Mammary epithelial cell (primary cell): ENCODE measurements at regions of chr7 and their contacts with region 1.

Region 1: GRCh38 chr7:121519548-121520521 is 123.7 kb upstream of the FAM3C start:
- DNase-seq: no peak
- H3K4me3 ChIP-seq: no peak overlapping the region
- H3K27ac ChIP-seq: no peak overlapping the region
- H3K4me1 ChIP-seq: peaks cover 15% of the 10 kb centered on the region
- H3K27me3 ChIP-seq: no peaks in the 10 kb centered on the region
- CTCF ChIP-seq: no peak

Region 2: DNA sequence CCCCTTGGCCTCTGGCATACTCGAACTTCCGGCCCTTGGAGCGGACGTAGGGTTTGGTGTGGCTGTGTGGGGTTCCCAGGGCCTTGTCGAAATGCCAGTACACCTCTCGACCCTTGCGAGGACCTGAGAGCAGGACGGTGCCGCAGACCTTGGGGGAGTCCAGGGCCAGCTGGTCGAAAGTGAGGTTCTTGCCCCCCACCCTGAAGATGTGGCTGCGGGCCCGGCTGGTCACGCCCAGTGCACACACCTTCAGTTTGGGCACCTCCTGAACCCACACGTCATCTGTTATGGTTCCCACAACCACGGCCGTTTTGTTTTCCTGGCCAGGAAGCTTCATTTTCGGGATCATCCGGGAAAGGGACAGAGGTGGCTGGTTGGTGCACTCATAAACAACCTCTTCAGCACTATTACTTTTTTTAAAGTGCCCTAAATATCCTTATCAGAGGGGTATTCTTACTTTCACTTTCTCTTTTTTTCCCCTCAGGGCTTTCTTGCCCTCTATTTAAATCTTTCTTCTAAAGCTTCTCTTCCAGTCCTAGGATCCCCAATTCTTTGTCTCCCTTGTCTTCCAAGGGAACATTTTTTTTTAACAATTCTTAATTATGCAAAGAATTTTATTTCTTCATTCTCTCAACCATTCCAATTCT is 78.9 kb before region 1 on chr7:
- CTCF ChIA-PET with region 1: no interaction called
- dilution Hi-C with region 1: no loop called
- in situ Hi-C with region 1: no loop called
- intact Hi-C with region 1: loop called (anchors 5 kb)
- DNase-seq: no peak
- H3K4me3 ChIP-seq: no peak overlapping the region
- H3K27ac ChIP-seq: no peak overlapping the region
- H3K4me1 ChIP-seq: peaks cover 13% of the 10 kb centered on the region
- H3K27me3 ChIP-seq: no peaks in the 10 kb centered on the region
- CTCF ChIP-seq: no peak

Region 3: GRCh38 chr7:121475806-121476205 is 44.0 kb before region 1 on chr7:
- CTCF ChIA-PET with region 1: no interaction called
- dilution Hi-C with region 1: no loop called
- in situ Hi-C with region 1: no loop called
- intact Hi-C with region 1: no loop called
- DNase-seq: no peak
- H3K4me3 ChIP-seq: no peak overlapping the region
- H3K27ac ChIP-seq: no peak overlapping the region
- H3K4me1 ChIP-seq: peaks cover 7% of the 10 kb centered on the region
- H3K27me3 ChIP-seq: no peaks in the 10 kb centered on the region
- CTCF ChIP-seq: no peak

Region 4: DNA sequence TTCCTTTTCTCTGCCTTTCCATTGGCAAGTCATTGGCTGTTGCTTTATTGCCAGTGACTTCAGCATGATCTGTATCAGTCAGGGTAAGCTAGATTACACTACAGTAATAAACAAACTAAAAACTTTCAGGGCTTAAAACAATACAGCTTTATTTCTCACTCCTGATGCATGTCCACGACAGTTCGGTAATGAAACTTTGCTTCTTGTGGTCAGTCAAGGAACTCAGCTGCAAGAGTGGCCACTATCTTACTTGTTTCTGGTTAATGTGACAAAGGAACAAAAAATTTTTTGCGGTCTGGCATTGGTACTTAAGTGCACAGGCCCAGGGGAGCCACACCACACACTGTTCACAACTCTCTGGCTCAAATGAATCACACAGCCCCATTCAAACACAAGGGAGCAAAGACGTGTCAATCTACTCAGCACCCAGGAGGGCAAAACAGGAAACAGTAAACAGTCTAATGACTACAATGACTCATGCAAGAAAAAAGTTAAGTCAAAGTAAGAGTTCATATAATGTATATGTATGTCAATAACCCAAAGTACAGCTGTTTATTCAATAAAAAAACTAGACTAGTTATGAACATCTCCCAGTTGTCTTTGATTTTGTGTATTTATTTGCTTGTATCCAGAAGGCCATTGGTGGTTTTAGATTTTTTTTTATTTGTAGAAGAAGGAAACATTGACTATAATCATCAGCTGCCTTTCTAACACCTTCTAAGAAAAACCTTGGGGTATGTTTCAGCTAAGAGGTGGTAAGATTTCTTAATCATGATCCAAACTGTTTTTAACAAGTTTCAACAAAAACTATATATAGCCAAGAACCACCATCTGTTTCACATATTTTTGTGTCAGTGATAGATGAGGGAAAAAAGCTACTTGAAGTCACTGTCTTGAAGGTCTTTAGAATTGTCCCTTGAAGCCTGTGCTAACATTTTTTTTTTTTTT is 10.7 kb after region 1 on chr7:
- CTCF ChIA-PET with region 1: no interaction called
- dilution Hi-C with region 1: no loop called
- in situ Hi-C with region 1: no loop called
- intact Hi-C with region 1: loop called (anchors 1 kb)
- DNase-seq: peak; percentile 99
- H3K4me3 ChIP-seq: no peak overlapping the region
- H3K27ac ChIP-seq: peak overlapping the region; percentile 72
- H3K4me1 ChIP-seq: peaks cover 20% of the 10 kb centered on the region
- H3K27me3 ChIP-seq: no peaks in the 10 kb centered on the region
- CTCF ChIP-seq: peak in 1 of 2 donors; percentile 4

Region 5: DNA sequence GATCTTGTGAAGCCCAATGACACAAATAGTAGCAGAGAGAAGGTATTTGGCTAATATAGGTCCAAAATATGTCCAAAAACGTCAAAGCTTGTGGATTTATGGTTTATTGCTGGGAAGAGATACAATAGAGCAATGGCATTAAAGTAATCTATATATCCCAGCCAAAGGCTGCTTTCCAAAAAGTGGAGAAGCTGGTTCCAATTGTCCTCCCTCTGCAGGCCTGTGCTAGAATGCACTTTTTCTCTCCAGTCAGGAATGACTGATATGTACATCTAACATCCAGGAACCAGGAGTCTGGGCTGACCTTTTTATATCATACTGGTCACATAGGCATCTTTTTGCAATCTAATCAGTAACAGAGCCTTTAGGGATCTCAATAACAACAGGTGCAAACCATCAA is 43.3 kb after region 1 on chr7:
- CTCF ChIA-PET with region 1: no interaction called
- dilution Hi-C with region 1: no loop called
- in situ Hi-C with region 1: no loop called
- intact Hi-C with region 1: no loop called
- DNase-seq: no peak
- H3K4me3 ChIP-seq: no peak overlapping the region
- H3K27ac ChIP-seq: no peak overlapping the region
- H3K4me1 ChIP-seq: no peaks in the 10 kb centered on the region
- H3K27me3 ChIP-seq: no peaks in the 10 kb centered on the region
- CTCF ChIP-seq: peak; percentile 44 to 52